B cell (primary cell): ENCODE measurements at regions of chr16 and their contacts with region 1.

Region 1: DNA sequence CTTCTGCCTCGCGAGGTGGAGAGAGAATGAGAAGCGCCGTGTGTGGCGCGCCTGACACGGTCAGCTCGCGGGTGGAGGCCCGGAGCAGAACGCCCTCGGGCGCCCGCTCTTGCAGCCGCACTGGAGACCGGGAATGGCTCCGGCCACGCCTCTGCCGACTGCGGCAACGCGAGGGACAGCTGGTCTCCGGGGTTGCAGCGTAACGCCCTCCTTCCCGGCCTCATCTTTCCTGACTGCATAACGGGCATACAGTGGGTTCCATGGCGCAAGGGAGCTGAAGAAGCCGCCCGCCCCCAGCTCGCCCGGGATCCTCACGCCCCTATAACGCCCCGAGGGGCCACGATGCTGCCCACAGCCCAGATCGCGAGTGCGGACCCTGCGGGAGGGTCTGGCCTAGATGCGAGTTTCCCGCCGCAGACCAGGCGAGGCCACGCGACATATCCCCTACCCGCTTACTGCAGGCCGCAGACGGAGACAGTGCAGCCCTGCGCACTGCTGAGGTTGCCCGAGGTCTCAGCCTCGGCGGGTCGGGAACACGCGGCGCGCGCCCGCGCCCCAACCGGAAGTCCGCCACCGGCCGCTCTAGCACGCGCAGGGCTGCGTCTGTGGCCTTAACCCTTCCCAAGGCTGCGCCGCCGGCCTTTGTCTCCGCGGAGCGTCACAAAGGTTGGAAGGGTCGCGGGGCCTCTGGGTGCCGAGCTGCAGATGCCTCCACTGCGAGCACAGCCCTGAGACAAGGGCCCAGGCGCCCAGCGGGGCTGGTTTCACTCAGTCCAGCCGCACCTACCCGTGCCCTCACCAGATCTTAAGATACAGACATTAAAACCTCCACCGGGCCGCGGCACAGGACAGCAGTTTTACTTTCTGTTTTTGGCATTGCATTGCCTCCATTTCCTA is 18.8 kb downstream of the BCL7C start:
- DNase-seq: peak; percentile 93
- ATAC-seq: peak; percentile 88
- H3K4me3 ChIP-seq: peak overlapping the region; percentile 78 to 99 (median 81)
- H3K4me3 Mint-ChIP-seq: peak overlapping the region; percentile 97
- H3K27ac ChIP-seq: peak overlapping the region; percentile 82 to 88
- H3K27ac Mint-ChIP-seq: peak overlapping the region; percentile 97
- H3K4me1 ChIP-seq: peaks cover 16 to 21% of the 10 kb centered on the region in 2 donors
- H3K4me1 Mint-ChIP-seq: peaks cover 36% of the 10 kb centered on the region
- H3K27me3 ChIP-seq: no peaks in the 10 kb centered on the region
- H3K27me3 Mint-ChIP-seq: no peaks in the 10 kb centered on the region
- CTCF ChIP-seq: no peak

Region 2: DNA sequence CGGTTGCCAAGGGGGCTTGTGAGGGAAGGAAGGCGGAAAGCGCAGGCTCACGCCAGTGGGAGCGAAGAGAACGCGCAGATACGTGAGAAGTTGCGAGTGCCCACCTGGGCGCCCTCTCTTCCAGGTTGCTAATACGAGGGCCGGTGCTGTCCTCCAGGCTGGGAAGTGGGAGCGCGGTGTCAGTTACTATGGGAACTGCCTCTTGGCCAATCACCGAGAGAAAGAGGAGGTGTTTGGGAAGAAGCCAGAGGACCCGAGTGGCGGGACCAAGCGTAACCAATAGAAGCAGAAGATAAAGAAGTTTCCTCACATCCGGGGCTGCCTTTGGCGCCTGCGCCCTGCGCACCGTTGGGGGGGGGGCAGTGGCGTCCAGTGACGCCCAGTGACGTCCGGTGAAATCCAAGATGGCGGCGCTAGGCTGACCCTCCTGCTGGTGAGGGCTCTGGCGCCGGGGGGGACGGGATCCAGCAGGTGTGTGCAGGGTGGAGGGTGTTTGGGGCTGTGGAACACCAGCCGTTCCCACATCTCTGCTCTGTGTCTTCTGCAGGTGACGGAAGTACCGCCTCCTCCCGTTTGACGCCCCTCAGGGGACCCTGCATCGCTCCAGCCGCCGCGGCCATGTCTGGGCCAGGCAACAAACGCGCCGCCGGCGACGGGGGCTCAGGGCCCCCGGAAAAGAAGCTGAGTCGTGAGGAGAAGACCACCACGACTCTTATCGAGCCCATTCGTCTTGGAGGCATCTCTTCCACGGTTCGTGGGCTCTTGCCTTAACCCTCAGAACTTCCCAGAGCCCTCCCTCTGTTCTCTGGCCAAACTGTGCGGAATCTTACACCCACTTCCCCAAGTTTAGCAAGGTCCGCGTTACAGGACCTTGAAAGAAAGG is 112.9 kb before region 1 on chr16 and contains the starts of genes CFAP119 and RNF40:
- CTCF ChIA-PET with region 1: no interaction called
- POLR2A ChIA-PET with region 1: no interaction called
- intact Hi-C with region 1: loop called (anchors 5 kb)
- DNase-seq: peak; percentile 95
- ATAC-seq: peak; percentile 92
- H3K4me3 ChIP-seq: peak within 1 kb of the TSS; percentile 82 to 93 (median 90)
- H3K4me3 Mint-ChIP-seq: peak within 1 kb of the TSS; percentile 98
- H3K27ac ChIP-seq: peak within 1 kb of the TSS; percentile 57 to 91
- H3K27ac Mint-ChIP-seq: peak within 1 kb of the TSS; percentile 95
- H3K4me1 ChIP-seq: peaks cover 24 to 37% of the 10 kb centered on the region in 2 donors
- H3K4me1 Mint-ChIP-seq: peaks cover 36% of the 10 kb centered on the region
- H3K27me3 ChIP-seq: no peaks in the 10 kb centered on the region
- H3K27me3 Mint-ChIP-seq: no peaks in the 10 kb centered on the region
- CTCF ChIP-seq: no peak
- total RNA-seq, gene CFAP119: 9.3 and 11.7 TPM in 2 replicates
- total RNA-seq, gene RNF40: 120 and 121 TPM in 2 replicates

Region 3: GRCh38 chr16:30786936-30787612 is 88.0 kb before region 1 on chr16 and contains the start of gene ZNF629:
- CTCF ChIA-PET with region 1: no interaction called
- POLR2A ChIA-PET with region 1: no interaction called
- intact Hi-C with region 1: no loop called
- DNase-seq: peak; percentile 60
- ATAC-seq: peak; percentile 62
- H3K4me3 ChIP-seq: peak within 1 kb of the TSS; percentile 54 to 84 (median 80)
- H3K4me3 Mint-ChIP-seq: peak within 1 kb of the TSS; percentile 87
- H3K27ac ChIP-seq: peak within 1 kb of the TSS in 1 of 2 donors; percentile 48
- H3K27ac Mint-ChIP-seq: peak within 1 kb of the TSS; percentile 32
- H3K4me1 ChIP-seq: peaks cover 16 to 20% of the 10 kb centered on the region in 2 donors
- H3K4me1 Mint-ChIP-seq: peaks cover 17% of the 10 kb centered on the region
- H3K27me3 ChIP-seq: peaks cover 0 to 17% (median 4%) of the 10 kb centered on the region in 4 experiments
- H3K27me3 Mint-ChIP-seq: peaks cover 10% of the 10 kb centered on the region
- CTCF ChIP-seq: no peak
- total RNA-seq, gene ZNF629: 6.4 and 6.9 TPM in 2 replicates

Region 4: GRCh38 chr16:30813821-30814189 is 61.3 kb before region 1 on chr16:
- CTCF ChIA-PET with region 1: interaction called, 9 read pairs
- POLR2A ChIA-PET with region 1: interaction called, 5 read pairs
- intact Hi-C with region 1: loop called (anchors 1 kb)
- DNase-seq: no peak
- ATAC-seq: no peak
- H3K4me3 ChIP-seq: peak overlapping the region; percentile 42 to 66 (median 57)
- H3K4me3 Mint-ChIP-seq: peak overlapping the region; percentile 88
- H3K27ac ChIP-seq: peak overlapping the region; percentile 65 to 69
- H3K27ac Mint-ChIP-seq: peak overlapping the region; percentile 85
- H3K4me1 ChIP-seq: peaks cover 9 to 15% of the 10 kb centered on the region in 2 donors
- H3K4me1 Mint-ChIP-seq: peaks cover 16% of the 10 kb centered on the region
- H3K27me3 ChIP-seq: no peaks in the 10 kb centered on the region
- H3K27me3 Mint-ChIP-seq: peaks cover 3% of the 10 kb centered on the region
- CTCF ChIP-seq: no peak

Region 5: DNA sequence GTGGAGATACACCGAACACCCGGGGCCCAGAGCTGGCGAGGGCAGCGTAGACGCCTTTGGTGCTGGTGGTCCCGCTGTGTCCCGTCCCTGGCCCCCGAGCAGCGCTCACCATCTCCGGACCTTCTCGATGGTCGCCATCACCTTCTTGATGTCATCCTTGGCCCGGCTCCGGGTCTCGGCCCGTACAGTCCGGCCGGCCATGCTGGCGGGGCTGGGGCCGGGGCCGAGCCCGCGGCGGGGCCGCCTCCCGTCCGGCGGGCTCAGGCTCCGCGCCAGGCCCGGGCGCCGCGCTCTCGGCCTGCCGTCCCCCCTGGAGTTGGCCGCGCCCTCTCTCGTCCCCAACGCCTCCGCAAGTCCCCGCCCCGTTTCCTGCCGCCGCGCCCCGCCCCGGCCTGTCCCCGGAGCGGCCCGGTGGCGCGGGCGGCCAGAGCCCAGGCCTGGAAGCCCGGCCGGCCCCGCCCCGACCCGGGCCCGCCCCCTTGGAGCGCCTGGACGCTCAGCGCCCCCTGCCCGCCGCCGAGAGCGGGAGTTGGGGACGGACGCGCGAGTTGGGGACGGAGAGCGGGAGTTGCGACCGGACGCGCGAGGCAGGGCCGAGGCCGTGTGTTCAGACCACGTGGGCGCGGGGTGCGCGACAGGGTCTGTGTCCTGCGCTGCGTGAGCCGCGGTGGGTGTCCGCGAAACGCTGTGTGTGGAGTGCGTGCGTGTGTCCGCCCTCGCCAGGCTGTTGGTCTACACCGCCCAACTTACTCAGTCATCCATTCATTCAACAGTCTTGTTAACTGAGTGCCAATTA is 18.9 kb after region 1 on chr16 and contains the start of gene BCL7C:
- CTCF ChIA-PET with region 1: interaction called, 6 read pairs
- POLR2A ChIA-PET with region 1: interaction called, 15 read pairs
- intact Hi-C with region 1: loop called (anchors 1 kb)
- DNase-seq: peak; percentile 85
- ATAC-seq: peak; percentile 80
- H3K4me3 ChIP-seq: peak within 1 kb of the TSS; percentile 11 to 72 (median 65)
- H3K4me3 Mint-ChIP-seq: peak within 1 kb of the TSS; percentile 91
- H3K27ac ChIP-seq: peak within 1 kb of the TSS; percentile 63 to 79
- H3K27ac Mint-ChIP-seq: peak within 1 kb of the TSS; percentile 93
- H3K4me1 ChIP-seq: peaks cover 32 to 43% of the 10 kb centered on the region in 2 donors
- H3K4me1 Mint-ChIP-seq: peaks cover 48% of the 10 kb centered on the region
- H3K27me3 ChIP-seq: no peaks in the 10 kb centered on the region
- H3K27me3 Mint-ChIP-seq: no peaks in the 10 kb centered on the region
- CTCF ChIP-seq: no peak
- total RNA-seq, gene BCL7C: 30.5 and 31.6 TPM in 2 replicates

Region 6: DNA sequence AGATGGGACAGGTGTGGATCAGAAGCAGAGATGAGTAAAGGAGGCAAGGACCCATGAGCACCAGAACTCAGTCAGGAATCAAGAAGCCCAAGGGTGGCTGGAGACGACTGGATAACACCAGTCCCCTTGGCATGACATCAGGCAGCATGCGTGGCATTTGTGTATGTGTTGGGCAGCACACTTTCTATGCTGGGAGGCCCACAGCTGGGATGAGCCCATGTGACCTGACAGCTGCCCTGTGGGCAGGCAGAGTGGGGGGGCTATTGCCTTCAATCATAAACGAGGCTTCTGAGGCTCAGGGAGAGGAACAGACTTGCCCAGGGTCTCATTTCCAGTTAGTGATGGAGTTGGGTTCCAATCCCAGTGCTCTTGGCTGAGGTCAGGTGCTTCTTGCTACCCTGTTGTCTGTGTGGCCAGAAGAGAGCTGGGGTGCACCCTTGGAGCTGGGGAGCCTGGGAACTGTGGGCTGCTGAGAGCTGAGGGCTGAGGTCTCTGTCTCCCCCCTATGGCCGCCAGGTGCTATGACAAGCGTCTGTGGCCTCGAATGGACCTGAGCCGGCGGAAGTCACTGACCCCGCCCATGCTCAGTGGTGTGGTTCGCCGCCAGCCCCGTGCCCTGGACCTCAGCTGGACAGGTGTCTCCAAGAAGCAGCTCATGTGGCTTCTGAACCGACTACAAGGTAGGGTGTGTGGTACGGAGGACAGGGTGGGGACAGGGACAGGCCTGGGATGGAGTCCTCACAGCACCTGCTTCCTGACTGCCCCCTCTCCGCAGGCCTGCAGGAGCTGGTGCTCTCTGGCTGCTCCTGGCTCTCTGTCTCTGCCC is 66.7 kb after region 1 on chr16:
- CTCF ChIA-PET with region 1: interaction called, 4 read pairs
- POLR2A ChIA-PET with region 1: no interaction called
- intact Hi-C with region 1: loop called (anchors 2 kb)
- DNase-seq: peak; percentile 82
- ATAC-seq: peak; percentile 100
- H3K4me3 ChIP-seq: peak overlapping the region in 2 of 5 experiments; percentile 16 to 23
- H3K4me3 Mint-ChIP-seq: no peak overlapping the region
- H3K27ac ChIP-seq: no peak overlapping the region
- H3K27ac Mint-ChIP-seq: peak overlapping the region; percentile 59
- H3K4me1 ChIP-seq: peaks cover 11 to 19% of the 10 kb centered on the region in 2 donors
- H3K4me1 Mint-ChIP-seq: peaks cover 17% of the 10 kb centered on the region
- H3K27me3 ChIP-seq: no peaks in the 10 kb centered on the region
- H3K27me3 Mint-ChIP-seq: no peaks in the 10 kb centered on the region
- CTCF ChIP-seq: peak; percentile 88